ENCODE measurements at regions of chr20 and their contacts with region 1.

Region 1: GRCh38 chr20:43749734-43750294 is 23.0 kb upstream of the GTSF1L start:
- DNase-seq: peak; percentile 75
- H3K4me3 Mint-ChIP-seq: no peak overlapping the region
- H3K27ac Mint-ChIP-seq: peak overlapping the region; percentile 94
- H3K4me1 Mint-ChIP-seq: peaks cover 19% of the 10 kb centered on the region
- H3K27me3 Mint-ChIP-seq: no peaks in the 10 kb centered on the region
- CTCF ChIP-seq: peak; percentile 100

Region 2: DNA sequence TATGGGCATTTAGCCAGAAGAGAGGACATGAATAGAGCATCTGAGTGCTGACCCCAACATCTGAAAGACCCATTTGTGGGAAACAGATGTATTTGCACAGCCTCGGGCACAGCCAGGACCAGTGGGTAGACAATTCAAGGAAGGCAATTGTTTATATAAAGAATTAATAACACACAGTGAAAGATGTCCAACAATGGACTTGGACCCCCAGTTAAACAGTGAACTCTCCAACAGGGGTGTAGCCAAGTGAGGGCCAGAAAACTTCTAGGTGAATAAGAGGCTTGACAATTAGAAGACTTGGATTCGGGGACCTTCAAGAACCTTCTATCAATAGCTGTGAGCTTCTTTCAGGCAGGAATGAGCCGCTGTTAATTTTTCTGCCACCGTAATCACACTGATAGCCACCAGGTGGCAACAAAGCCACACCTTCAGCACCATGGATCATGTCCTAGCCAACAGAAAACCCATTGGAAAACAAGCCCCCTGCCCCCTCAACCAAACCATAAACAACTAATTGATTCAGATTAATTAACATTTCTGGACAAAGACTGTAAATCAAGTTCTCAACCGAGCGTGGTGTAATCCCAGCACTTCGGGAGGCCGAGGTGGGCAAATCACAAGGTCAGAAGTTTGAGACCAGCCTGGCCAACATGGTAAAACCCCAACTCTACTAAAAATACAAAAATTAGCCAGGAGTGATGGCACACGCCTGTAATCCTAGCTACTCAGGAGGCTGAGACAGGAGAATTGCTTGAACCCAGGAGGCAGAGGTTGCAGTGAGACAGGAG is 300.9 kb before region 1 on chr20:
- CTCF ChIA-PET with region 1: interaction called, 14 read pairs
- POLR2A ChIA-PET with region 1: no interaction called
- intact Hi-C with region 1: loop called (anchors 2 kb)
- DNase-seq: peak; percentile 56
- H3K4me3 Mint-ChIP-seq: no peak overlapping the region
- H3K27ac Mint-ChIP-seq: no peak overlapping the region
- H3K4me1 Mint-ChIP-seq: no peaks in the 10 kb centered on the region
- H3K27me3 Mint-ChIP-seq: peaks cover 9% of the 10 kb centered on the region
- CTCF ChIP-seq: peak; percentile 82

Region 3: DNA sequence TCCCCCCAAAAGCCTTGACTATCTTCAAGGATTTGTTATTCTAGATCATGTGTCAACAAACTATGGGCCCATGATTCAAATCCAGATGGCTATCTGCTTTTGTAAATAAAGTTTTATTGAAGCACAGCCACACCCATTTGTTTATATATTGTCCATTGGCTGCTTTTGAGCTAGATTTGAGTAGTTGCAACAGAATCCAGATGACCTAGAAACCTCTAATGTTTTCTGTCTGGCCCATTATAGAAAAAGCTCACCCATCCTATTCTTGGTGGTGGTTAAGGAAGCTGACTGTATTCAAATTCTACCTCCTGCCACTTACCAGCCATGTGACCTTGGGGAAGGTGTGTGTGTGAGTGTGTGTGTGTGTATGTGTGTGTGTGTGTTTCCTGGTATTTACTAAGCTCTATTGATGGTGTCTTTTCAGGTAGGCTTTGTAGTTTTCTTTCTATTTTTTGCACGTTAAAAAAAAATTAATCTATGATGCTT is 21.7 kb before region 1 on chr20:
- CTCF ChIA-PET with region 1: interaction called, 26 read pairs
- POLR2A ChIA-PET with region 1: no interaction called
- intact Hi-C with region 1: no loop called
- DNase-seq: no peak
- H3K4me3 Mint-ChIP-seq: no peak overlapping the region
- H3K27ac Mint-ChIP-seq: no peak overlapping the region
- H3K4me1 Mint-ChIP-seq: no peaks in the 10 kb centered on the region
- H3K27me3 Mint-ChIP-seq: peaks cover 13% of the 10 kb centered on the region
- CTCF ChIP-seq: no peak

Region 4: DNA sequence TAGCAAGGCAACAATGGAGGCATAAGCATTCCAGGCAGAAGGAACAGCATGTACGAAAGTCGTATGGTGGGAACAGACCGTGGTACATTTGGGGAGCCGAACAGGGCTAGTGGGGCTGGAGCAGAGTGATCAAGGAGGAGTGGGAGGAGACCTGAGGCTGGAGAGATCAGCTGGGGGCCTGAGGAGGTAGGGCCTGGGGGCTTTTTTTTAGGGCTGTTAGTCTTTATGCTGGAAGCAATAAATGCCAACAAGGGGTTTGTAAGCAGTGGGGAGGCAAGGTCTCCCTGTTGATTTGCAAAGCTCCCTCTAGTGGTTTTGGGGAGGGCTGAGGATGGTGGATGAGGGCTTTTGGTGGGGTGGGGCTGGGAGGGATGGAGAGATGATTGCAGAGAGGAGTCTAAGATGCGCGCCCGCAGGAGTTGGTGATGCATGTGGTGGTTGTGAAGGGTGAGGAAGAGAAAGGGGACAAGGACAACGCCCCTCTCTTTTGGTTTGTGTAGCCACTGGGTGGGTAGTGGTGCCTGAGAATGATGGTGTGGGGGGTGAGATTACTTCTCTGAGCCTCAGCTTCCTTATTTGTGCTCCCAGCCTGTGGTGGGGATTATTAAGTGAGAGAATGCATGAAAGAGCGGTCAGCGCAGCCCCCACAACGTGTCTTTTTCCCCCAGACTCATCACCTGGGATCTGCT is 90.7 kb after region 1 on chr20:
- CTCF ChIA-PET with region 1: interaction called, 19 read pairs
- POLR2A ChIA-PET with region 1: no interaction called
- intact Hi-C with region 1: loop called (anchors 10 kb)
- DNase-seq: peak; percentile 53
- H3K4me3 Mint-ChIP-seq: no peak overlapping the region
- H3K27ac Mint-ChIP-seq: no peak overlapping the region
- H3K4me1 Mint-ChIP-seq: peaks cover 20% of the 10 kb centered on the region
- H3K27me3 Mint-ChIP-seq: no peaks in the 10 kb centered on the region
- CTCF ChIP-seq: peak; percentile 37

Region 5: GRCh38 chr20:43955062-43955749 is 205.4 kb after region 1 on chr20:
- CTCF ChIA-PET with region 1: interaction called, 11 read pairs
- POLR2A ChIA-PET with region 1: no interaction called
- intact Hi-C with region 1: no loop called
- DNase-seq: peak; percentile 96
- H3K4me3 Mint-ChIP-seq: no peak overlapping the region
- H3K27ac Mint-ChIP-seq: no peak overlapping the region
- H3K4me1 Mint-ChIP-seq: peaks cover 43% of the 10 kb centered on the region
- H3K27me3 Mint-ChIP-seq: no peaks in the 10 kb centered on the region
- CTCF ChIP-seq: no peak

Region 6: GRCh38 chr20:44056010-44056698 is 306.3 kb after region 1 on chr20:
- CTCF ChIA-PET with region 1: interaction called, 20 read pairs
- POLR2A ChIA-PET with region 1: no interaction called
- intact Hi-C with region 1: no loop called
- DNase-seq: peak; percentile 35
- H3K4me3 Mint-ChIP-seq: no peak overlapping the region
- H3K27ac Mint-ChIP-seq: no peak overlapping the region
- H3K4me1 Mint-ChIP-seq: no peaks in the 10 kb centered on the region
- H3K27me3 Mint-ChIP-seq: no peaks in the 10 kb centered on the region
- CTCF ChIP-seq: no peak

Region 7: GRCh38 chr20:44092551-44093248 is 342.9 kb after region 1 on chr20:
- CTCF ChIA-PET with region 1: interaction called, 521 read pairs
- POLR2A ChIA-PET with region 1: interaction called, 4 read pairs
- intact Hi-C with region 1: no loop called
- DNase-seq: peak; percentile 61
- H3K4me3 Mint-ChIP-seq: no peak overlapping the region
- H3K27ac Mint-ChIP-seq: no peak overlapping the region
- H3K4me1 Mint-ChIP-seq: peaks cover 16% of the 10 kb centered on the region
- H3K27me3 Mint-ChIP-seq: no peaks in the 10 kb centered on the region
- CTCF ChIP-seq: peak; percentile 52